MCF 10A (cell line): ENCODE measurements at regions of chr6 and their contacts with region 1.

Region 1: DNA sequence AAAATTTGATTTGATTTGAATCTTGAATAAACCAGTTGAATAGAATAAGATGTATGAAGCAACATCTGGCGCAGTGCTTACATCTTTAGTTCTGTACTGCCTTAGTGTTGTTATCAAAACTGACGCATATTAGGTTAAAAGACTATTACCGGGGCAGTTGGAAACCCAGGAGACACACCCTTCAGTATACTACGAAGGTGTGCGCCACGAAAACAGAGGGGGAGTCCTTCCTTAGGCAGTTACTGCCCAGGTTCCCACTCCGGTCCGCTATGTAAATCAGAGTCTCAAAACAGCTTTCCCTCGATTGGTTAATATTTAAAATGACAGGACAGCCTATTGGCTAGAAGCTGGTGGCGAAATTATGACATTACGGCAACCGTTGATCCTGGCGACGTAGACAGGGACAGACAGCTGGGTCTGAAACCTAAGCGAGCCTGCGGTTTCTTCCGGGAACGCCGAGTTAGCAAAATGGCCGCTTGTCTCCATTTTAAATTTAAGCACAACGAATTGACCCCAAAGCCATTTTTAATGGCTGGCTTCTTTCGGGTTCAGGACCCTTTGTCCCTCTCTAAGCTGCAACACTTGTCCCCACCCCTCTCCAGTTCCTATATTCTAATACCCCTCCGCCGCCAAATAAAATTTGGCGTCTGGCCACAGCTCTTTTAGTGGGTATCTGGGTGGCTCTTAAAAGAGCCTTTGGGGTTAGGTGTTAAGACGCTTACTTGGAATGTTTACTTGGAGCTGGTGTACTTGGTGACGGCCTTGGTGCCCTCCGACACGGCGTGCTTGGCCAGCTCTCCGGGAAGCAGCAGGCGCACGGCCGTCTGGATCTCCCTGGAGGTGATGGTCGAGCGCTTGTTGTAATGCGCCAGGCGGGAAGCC is 35.8 kb downstream of the HFE start:
- DNase-seq: peak; percentile 99
- H3K4me3 Mint-ChIP-seq: peak overlapping the region; percentile 98
- H3K27ac Mint-ChIP-seq: peak overlapping the region; percentile 99
- H3K4me1 Mint-ChIP-seq: peaks cover 14% of the 10 kb centered on the region
- H3K27me3 Mint-ChIP-seq: no peaks in the 10 kb centered on the region
- CTCF ChIP-seq: no peak

Region 2: DNA sequence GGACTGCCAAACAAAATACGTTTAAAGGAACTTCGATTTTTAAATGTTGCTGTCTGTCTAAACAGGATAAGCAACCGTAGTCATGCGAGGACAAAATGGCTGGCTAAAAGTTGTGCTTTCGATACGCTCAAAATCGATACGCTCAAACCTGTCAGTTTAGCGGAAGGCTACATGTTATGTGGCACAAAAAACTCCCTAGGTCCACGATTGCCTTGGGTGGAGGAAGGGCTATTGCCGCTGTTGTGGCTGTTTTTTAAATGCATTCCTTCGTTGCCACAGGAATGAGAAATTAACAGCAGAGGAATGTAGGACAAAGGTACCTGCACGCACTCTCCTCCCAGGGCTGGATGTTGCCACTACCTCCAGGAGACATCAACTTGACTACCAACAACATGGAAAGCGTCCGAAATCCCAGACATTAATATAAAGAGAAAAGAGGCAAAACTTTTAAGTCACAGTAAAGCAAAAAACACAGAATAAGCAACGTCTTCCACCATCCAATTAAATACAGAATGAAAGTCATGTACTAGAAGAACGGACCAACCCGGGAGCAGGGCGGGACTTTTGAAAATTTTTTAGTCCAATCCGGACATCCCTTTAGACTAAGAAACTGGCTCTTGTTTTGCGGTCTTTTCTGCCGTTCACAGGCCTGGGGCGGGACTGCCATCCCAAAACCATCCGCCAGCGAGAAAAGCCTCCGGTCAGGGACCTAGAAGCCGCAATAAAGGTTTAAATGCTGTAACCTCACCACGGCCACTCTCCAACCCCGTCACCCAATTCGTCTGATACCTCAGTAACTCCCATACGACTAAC is 68.0 kb before region 1 on chr6:
- CTCF ChIA-PET with region 1: no interaction called
- POLR2A ChIA-PET with region 1: interaction called, 132 read pairs
- intact Hi-C with region 1: no loop called
- DNase-seq: peak; percentile 96
- H3K4me3 Mint-ChIP-seq: peak overlapping the region; percentile 74
- H3K27ac Mint-ChIP-seq: peak overlapping the region; percentile 92
- H3K4me1 Mint-ChIP-seq: no peaks in the 10 kb centered on the region
- H3K27me3 Mint-ChIP-seq: no peaks in the 10 kb centered on the region
- CTCF ChIP-seq: no peak

Region 3: GRCh38 chr6:26141378-26141904 is 18.4 kb after region 1 on chr6:
- CTCF ChIA-PET with region 1: no interaction called
- POLR2A ChIA-PET with region 1: interaction called, 23 read pairs
- intact Hi-C with region 1: no loop called
- DNase-seq: no peak
- H3K4me3 Mint-ChIP-seq: no peak overlapping the region
- H3K27ac Mint-ChIP-seq: no peak overlapping the region
- H3K4me1 Mint-ChIP-seq: peaks cover 9% of the 10 kb centered on the region
- H3K27me3 Mint-ChIP-seq: no peaks in the 10 kb centered on the region
- CTCF ChIP-seq: no peak

Region 4: GRCh38 chr6:26196846-26197648 is 74.0 kb after region 1 on chr6:
- CTCF ChIA-PET with region 1: no interaction called
- POLR2A ChIA-PET with region 1: interaction called, 728 read pairs
- intact Hi-C with region 1: loop called (anchors 1 kb)
- DNase-seq: peak; percentile 94
- H3K4me3 Mint-ChIP-seq: peak overlapping the region; percentile 93
- H3K27ac Mint-ChIP-seq: peak overlapping the region; percentile 96
- H3K4me1 Mint-ChIP-seq: peaks cover 28% of the 10 kb centered on the region
- H3K27me3 Mint-ChIP-seq: no peaks in the 10 kb centered on the region
- CTCF ChIP-seq: no peak

Region 5: GRCh38 chr6:26270903-26271667 is 148.1 kb after region 1 on chr6:
- CTCF ChIA-PET with region 1: no interaction called
- POLR2A ChIA-PET with region 1: interaction called, 133 read pairs
- intact Hi-C with region 1: loop called (anchors 1 kb)
- DNase-seq: peak; percentile 97
- H3K4me3 Mint-ChIP-seq: no peak overlapping the region
- H3K27ac Mint-ChIP-seq: peak overlapping the region; percentile 54
- H3K4me1 Mint-ChIP-seq: peaks cover 6% of the 10 kb centered on the region
- H3K27me3 Mint-ChIP-seq: no peaks in the 10 kb centered on the region
- CTCF ChIP-seq: no peak

Region 6: GRCh38 chr6:27825025-27825793 is 1702.2 kb after region 1 on chr6:
- CTCF ChIA-PET with region 1: interaction called, 5 read pairs
- POLR2A ChIA-PET with region 1: interaction called, 43 read pairs
- intact Hi-C with region 1: no loop called
- DNase-seq: no peak
- H3K4me3 Mint-ChIP-seq: peak overlapping the region; percentile 94
- H3K27ac Mint-ChIP-seq: peak overlapping the region; percentile 95
- H3K4me1 Mint-ChIP-seq: peaks cover 10% of the 10 kb centered on the region
- H3K27me3 Mint-ChIP-seq: no peaks in the 10 kb centered on the region
- CTCF ChIP-seq: no peak